ENCODE measurements at regions of chr3 and their contacts with region 1.

Region 1: DNA sequence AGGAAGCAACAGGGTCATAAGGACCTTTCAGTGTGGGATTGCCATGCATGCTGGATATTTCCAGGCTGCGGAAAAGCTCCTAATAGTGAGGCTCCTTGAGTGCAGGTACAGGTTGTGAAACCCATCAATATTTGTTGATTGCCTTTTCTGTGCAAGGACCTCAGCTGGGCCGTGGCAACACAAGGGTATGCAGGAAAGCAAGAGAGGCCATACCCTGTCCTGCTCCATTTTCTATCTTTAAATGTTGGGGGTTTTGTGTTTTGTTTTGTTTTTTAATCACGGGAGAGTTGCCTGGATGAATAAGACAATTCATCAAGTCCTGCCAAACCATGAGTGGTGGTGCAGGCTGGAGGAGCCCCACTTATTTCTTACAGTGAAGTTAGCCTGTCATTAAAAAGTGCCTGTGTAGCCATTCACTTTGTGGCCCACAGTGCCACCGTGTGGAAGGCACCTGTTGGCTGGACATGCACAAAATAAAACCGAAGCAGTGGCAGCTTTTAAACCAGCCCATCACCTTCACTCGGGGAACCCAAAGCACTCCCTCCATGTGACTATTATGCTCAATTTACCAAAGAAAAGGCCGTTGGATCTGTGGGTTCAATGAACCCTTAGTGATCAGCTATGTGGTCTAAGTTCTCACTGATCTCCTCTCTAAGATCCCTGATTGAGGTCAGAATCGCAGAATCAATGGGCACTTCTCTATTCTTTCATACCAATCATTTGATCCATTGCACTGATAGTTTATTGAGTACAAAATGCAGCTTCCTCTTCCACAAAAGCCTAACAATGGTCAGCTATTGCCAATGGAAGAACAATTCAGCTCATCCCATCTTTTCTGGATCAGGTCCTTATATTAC is 42.2 kb downstream of the CLDN18 start:
- DNase-seq: peak; percentile 60
- ATAC-seq: peak; percentile 81
- H3K4me3 ChIP-seq: no peak overlapping the region
- H3K27ac ChIP-seq: no peak overlapping the region
- H3K4me1 ChIP-seq: no peaks in the 10 kb centered on the region
- H3K27me3 ChIP-seq: no peaks in the 10 kb centered on the region
- CTCF ChIP-seq: peak; percentile 79

Region 2: DNA sequence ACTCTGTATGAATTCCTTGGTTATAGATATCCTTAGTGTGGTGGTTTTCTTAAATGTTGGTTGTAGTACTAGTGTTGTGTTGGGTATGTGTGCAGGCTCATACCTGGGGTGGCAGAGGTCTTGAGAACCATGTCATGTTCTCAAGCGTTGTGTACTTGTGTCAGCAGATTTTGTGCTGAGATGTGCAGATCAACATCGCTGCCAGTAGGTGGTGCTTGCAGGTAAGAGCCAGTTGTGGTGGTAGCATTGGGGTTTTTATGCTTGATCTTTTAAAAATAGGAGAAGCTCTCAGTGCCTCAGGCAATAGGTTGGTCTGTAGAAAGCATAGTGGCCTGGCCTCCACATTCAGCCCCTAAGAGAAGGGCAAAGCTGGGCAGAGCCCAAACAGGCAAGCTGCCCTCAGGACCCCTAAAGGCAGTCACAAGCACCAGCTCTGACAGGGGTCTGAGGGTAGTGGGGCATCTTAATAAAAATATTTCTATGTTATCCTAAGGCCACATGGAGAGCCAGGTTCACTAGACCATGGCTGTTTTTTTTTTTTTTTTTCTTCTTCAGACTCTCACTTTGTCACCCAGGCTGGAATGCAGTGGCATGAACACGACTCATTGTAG is 930.4 kb before region 1 on chr3:
- CTCF ChIA-PET with region 1: no interaction called
- POLR2A ChIA-PET with region 1: no interaction called
- intact Hi-C with region 1: loop called (anchors 5 kb)
- DNase-seq: peak; percentile 52
- ATAC-seq: peak; percentile 56
- H3K4me3 ChIP-seq: no peak overlapping the region
- H3K27ac ChIP-seq: no peak overlapping the region
- H3K4me1 ChIP-seq: no peaks in the 10 kb centered on the region
- H3K27me3 ChIP-seq: peaks cover 14% of the 10 kb centered on the region
- CTCF ChIP-seq: peak; percentile 68

Region 3: GRCh38 chr3:137970914-137971831 is 81.0 kb before region 1 on chr3:
- CTCF ChIA-PET with region 1: no interaction called
- POLR2A ChIA-PET with region 1: no interaction called
- intact Hi-C with region 1: loop called (anchors 1 kb)
- DNase-seq: peak; percentile 78
- ATAC-seq: peak; percentile 98
- H3K4me3 ChIP-seq: peak overlapping the region; percentile 48; the same call in 1 of the 2 replicates
- H3K27ac ChIP-seq: no peak overlapping the region
- H3K4me1 ChIP-seq: no peaks in the 10 kb centered on the region
- H3K27me3 ChIP-seq: no peaks in the 10 kb centered on the region
- CTCF ChIP-seq: peak; percentile 81